ENCODE measurements at regions of chr21 and their contacts with region 1.

Region 1: GRCh38 chr21:36630485-36631206 is 68.3 kb upstream of the SIM2 start:
- DNase-seq: no peak
- H3K4me3 ChIP-seq: no peak overlapping the region
- CTCF ChIP-seq: peak; percentile 70

Region 2: GRCh38 chr21:36419996-36420395 is 210.7 kb before region 1 on chr21:
- CTCF ChIA-PET with region 1: interaction called, 13 read pairs
- POLR2A ChIA-PET with region 1: no interaction called
- DNase-seq: peak; percentile 51
- H3K4me3 ChIP-seq: no peak overlapping the region
- CTCF ChIP-seq: peak; percentile 83

Region 3: DNA sequence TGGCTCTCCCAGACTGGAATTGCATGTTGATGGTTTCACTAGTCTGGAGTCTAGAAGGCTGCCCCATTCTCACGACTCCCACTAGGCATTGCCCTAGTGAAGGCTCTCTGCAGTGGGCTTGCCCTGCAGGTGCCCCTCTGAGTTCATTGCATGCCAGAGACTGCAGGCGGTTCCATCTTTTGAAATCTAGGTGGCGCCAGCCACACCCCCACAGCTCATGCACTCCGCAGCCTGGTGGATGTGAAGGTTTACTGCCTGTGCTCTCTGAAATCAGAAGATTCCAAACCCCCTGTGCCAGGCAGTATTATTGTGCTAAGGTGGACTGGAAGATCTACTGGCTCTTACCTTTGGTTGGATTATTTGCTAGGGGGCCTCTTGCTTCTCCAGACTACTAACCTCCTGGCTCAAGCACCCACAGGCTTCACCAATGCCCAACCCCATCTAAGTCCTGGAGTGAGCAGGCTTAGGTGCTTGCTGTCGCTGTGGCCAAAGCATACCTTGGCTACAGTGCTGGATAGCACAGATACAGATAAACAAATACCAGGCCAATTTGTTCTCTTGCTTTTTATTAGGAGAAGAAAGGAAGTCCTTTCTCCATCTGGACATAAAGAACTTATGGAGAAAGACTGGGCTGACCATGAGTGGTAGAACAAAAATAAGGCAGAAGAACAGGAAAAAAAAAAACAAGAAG is 15.2 kb before region 1 on chr21:
- CTCF ChIA-PET with region 1: interaction called, 11 read pairs
- POLR2A ChIA-PET with region 1: no interaction called
- DNase-seq: no peak
- H3K4me3 ChIP-seq: no peak overlapping the region
- CTCF ChIP-seq: no peak

Region 4: GRCh38 chr21:36654324-36654723 is 23.7 kb after region 1 on chr21:
- CTCF ChIA-PET with region 1: interaction called, 11 read pairs
- POLR2A ChIA-PET with region 1: no interaction called
- DNase-seq: no peak
- H3K4me3 ChIP-seq: no peak overlapping the region
- CTCF ChIP-seq: no peak

Region 5: DNA sequence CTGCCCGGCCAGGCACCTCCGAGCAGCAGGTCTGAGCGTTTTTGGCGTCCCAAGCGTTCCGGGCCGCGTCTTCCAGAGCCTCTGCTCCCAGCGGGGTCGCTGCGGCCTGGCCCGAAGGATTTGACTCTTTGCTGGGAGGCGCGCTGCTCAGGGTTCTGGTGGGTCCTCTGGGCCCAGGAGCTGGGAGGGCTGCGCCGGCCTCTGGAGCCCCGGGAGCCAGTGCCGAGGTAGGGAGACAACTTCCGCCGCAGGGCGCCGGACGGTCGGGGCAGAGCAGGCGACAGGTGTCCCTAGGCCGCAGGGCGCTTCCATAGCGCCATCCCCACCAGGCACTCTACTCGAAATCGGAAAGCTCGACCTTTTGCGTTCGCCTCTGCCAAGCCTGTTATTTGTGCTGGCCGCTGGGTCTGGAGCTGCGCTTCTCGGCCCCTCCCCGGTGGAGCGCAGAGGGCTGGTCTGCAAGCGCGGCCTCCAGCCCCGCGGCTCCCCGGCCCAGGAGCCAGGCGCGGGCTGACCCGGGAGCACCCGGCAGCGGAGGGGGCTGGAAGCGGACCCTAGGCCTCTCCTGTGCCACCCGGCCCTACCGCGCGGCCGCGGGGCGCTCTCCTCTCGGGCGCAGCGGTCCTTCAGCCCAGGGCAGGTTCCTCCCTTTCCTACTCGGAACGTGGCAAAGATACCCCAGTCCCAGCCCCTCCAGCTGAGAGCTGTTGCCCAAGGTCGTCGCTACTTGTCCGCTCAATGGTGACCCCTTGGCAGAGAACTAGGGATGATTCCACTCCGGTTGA is 70.5 kb after region 1 on chr21:
- CTCF ChIA-PET with region 1: interaction called, 10 read pairs
- POLR2A ChIA-PET with region 1: no interaction called
- DNase-seq: no peak
- H3K4me3 ChIP-seq: peak overlapping the region; percentile 48
- CTCF ChIP-seq: no peak

Region 6: GRCh38 chr21:36934864-36935420 is 304.3 kb after region 1 on chr21:
- CTCF ChIA-PET with region 1: interaction called, 12 read pairs
- POLR2A ChIA-PET with region 1: no interaction called
- DNase-seq: no peak
- H3K4me3 ChIP-seq: no peak overlapping the region
- CTCF ChIP-seq: no peak